ENCODE measurements at regions of chr1 and their contacts with region 1.

Region 1: GRCh38 chr1:89928506-89928905 is 66.4 kb upstream of the ZNF326 start:
- DNase-seq: peak; percentile 90
- ATAC-seq: peak; percentile 99
- H3K4me3 ChIP-seq: no peak overlapping the region
- H3K27ac ChIP-seq: peak overlapping the region; percentile 67
- H3K4me1 ChIP-seq: peaks cover 56% of the 10 kb centered on the region
- H3K27me3 ChIP-seq: no peaks in the 10 kb centered on the region
- CTCF ChIP-seq: no peak
- EP300 ChIP-seq: peak in 1 of 2 experiments; percentile 76; a peak in 2 of 4 replicates
- POLR2A ChIP-seq: no peak
- RAD21 ChIP-seq: no peak

Region 2: DNA sequence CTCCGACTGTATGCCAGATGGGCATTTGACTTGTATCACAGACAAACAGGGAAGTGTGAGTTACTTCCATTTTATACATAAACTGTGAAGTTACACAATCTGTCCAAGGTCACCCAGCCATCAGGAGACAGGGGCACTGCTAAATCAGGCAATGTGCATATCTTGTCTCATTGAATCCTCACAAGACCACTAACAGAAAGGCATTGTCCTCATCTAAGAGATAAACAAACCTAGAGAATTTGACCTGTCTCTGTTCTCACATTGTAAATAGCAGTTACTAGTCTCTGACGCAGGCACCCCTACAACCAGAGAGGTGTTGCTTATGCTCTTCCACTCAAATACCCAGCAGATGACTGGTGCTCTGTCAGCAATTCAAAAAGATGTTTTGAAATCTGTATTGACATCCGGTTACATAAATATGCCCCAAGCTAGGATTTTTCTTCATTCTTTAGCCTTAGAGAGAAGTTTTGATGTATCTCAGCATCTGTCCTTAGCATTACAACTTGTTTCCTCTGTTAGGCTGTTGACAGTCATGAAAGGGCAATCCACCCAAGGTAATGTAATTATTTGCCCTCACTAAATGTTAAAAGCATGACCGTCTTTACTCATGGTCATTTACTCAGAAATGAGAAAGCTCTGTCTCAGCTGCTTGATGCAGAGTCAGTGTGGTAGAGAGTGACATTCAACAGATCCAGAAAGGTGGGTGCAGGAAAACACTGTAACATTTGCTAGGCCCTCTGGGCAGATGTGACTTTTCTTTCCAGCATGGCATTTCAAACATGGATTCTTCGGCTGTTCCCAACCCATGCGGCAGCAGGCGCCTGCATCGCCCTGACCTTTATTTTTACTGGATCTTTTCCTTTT is 14.6 kb after region 1 on chr1:
- CTCF ChIA-PET with region 1: no interaction called
- POLR2A ChIA-PET with region 1: no interaction called
- in situ Hi-C with region 1: no loop called
- intact Hi-C with region 1: loop called (anchors 1 kb)
- DNase-seq: peak; percentile 96
- ATAC-seq: peak; percentile 87
- H3K4me3 ChIP-seq: peak overlapping the region in 1 of 3 experiments; percentile 17; a peak in 1 of 6 replicates
- H3K27ac ChIP-seq: peak overlapping the region; percentile 80
- H3K4me1 ChIP-seq: peaks cover 74% of the 10 kb centered on the region
- H3K27me3 ChIP-seq: no peaks in the 10 kb centered on the region
- CTCF ChIP-seq: no peak
- EP300 ChIP-seq: peak in 1 of 2 experiments; percentile 43; a peak in 2 of 4 replicates
- POLR2A ChIP-seq: no peak
- RAD21 ChIP-seq: no peak

Measured in HepG2 (cell line).